ENCODE measurements at regions of chr5 and their contacts with region 1.

Region 1: DNA sequence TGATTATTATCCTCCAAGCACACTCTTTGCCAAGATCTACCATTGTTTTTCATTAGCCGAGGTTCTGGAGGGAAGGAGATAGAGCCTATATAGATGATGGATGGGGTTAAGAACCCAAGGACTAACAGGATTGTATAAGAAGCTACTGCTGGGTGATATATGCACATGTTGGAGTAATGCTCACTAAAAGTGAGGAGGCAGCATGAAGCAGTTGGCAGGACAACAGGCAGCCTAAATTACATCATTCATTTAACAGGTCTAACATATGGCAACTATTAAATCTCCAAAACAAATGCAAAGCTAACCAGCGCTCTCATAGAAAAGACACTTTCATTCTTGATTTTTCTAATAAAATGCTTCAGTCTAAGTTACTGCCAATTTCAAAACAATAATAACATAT is 293.2 kb downstream of the EPB41L4A start:
- DNase-seq: no peak
- ATAC-seq: no peak
- H3K4me3 ChIP-seq: no peak overlapping the region
- H3K27ac ChIP-seq: no peak overlapping the region
- H3K4me1 ChIP-seq: no peaks in the 10 kb centered on the region
- H3K27me3 ChIP-seq: no peaks in the 10 kb centered on the region
- CTCF ChIP-seq: no peak
- POLR2A ChIP-seq: no peak

Region 2: DNA sequence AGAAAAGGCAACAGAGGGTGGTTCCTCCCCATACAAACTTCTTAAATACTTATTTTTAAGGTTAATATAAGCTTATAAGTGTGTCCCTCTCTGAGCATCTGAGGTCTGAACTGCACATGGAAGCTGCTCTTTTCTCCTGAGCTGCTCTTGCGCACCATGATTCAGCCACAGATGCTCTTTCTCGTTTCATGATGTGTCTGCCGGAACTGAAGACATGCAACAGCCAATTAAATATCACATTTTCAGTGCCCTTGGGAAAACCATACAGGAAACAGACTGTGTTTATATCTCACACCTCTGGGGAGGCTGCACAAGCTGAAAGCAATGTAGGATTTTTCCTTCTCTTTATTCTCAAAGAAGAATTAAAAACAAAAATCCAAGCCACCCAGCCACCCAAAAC is 272.2 kb before region 1 on chr5:
- intact Hi-C with region 1: loop called in 1 of 10 experiments (anchors 10 kb)
- DNase-seq: peak in 3 of 5 donors; percentile 9 to 26 (median 18)
- ATAC-seq: peak in 2 of 4 donors; percentile 51 to 60
- H3K4me3 ChIP-seq: no peak overlapping the region
- H3K27ac ChIP-seq: no peak overlapping the region
- H3K4me1 ChIP-seq: peaks cover 0 to 37% (median 12%) of the 10 kb centered on the region in 12 donors
- H3K27me3 ChIP-seq: no peaks in the 10 kb centered on the region
- CTCF ChIP-seq: no peak
- POLR2A ChIP-seq: no peak

Region 3: DNA sequence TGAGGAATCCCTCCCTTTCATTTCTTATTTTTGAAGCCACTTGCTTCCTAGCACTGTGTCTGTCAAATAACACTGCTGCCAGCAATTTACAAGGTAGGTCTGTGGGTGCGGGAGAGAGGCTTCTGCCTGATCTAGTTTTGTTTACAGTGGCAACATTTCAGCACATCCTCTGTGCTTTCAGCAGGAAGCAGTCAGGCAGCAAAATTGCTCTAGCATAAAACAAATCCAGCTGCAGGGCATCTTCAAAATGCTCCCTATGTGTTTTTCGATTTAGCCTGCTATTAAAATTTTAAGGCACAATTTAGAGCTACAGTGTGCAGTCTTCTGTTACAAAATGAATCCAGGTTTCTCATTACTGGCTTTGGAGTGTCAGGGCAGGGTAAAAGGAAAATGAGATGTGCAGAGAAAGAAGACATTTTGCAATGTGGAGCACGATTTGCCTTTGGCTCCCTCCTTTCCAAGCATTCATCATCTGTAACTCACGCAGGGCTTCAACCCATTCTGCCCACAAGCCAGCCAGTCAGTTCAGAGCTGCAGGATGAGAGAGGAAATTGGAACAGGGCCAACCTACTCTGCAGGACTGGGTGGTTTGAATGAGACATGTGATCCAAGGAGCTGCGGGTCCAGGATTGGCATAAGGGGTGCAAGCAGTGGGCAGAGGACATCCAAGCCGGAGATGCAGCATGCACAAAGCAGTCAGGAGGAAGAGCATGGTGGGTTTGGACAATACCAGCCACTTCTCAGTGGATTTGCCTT is 468.4 kb after region 1 on chr5:
- intact Hi-C with region 1: no loop called
- DNase-seq: no peak
- ATAC-seq: peak in 1 of 4 donors; percentile 51
- H3K4me3 ChIP-seq: no peak overlapping the region
- H3K27ac ChIP-seq: no peak overlapping the region
- H3K4me1 ChIP-seq: peaks cover 0 to 7% (median 0%) of the 10 kb centered on the region in 12 donors
- H3K27me3 ChIP-seq: no peaks in the 10 kb centered on the region
- CTCF ChIP-seq: no peak
- POLR2A ChIP-seq: no peak

Measured in heart left ventricle (tissue), 16 donors.